ENCODE measurements at regions of chr15 and their contacts with region 1.

Region 1: DNA sequence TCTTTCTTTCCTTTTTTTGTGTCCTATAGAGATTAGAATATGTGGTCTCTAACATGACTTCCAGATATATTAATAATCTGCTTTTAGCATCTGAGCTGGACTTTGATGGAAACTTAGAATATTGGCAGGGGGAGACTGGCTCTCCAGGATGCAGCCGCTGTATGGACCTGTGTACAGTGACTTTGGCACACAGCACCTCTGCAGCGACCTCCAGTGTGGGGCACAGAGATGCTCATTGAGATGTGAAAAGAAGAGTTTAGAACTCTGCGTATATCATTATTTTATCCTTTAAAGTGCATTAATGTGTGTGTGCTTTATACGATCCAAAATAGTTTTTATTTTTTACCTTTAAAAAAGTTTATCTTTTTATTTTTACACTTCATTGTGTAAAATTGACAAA is 18.3 kb downstream of the CFAP161 start:
- DNase-seq: no peak
- H3K4me3 ChIP-seq: no peak overlapping the region
- H3K27ac ChIP-seq: no peak overlapping the region
- H3K4me1 ChIP-seq: peaks cover 0 to 21% of the 10 kb centered on the region in 2 donors
- H3K27me3 ChIP-seq: no peaks in the 10 kb centered on the region
- CTCF ChIP-seq: no peak
- POLR2A ChIP-seq: no peak

Region 2: GRCh38 chr15:81106560-81106959 is 45.8 kb before region 1 on chr15:
- intact Hi-C with region 1: loop called (anchors 5 kb)
- DNase-seq: peak; percentile 49 to 58
- H3K4me3 ChIP-seq: no peak overlapping the region
- H3K27ac ChIP-seq: no peak overlapping the region
- H3K4me1 ChIP-seq: no peaks in the 10 kb centered on the region
- H3K27me3 ChIP-seq: no peaks in the 10 kb centered on the region
- CTCF ChIP-seq: peak; percentile 40 to 87 (median 78)
- POLR2A ChIP-seq: no peak

Region 3: DNA sequence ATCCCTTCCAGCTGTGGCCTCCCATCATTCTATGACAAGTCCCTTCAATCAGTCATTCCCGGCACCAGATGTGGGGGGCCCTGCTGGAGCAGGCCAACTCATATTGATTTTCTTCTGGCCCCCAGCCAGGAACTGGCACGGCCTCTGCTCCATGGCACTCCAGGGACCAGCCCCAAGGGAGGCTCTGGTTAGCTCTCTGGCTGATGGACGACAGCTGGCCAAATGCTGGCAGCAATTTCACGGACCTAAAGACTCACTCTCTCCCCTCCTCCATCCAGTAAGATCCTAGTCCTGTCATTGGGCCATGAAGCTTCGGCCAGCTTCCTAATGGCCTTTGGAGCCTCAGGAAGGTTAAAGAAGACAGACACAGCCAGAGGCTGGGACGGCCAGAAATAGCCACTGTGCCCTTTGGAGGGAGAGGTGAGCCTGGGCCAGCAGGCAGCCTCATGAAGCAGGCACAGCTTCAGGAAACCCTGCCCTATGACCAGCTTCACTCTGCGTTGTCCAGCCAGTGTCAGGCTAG is 762.5 kb after region 1 on chr15:
- intact Hi-C with region 1: no loop called
- DNase-seq: no peak
- H3K4me3 ChIP-seq: no peak overlapping the region
- H3K27ac ChIP-seq: no peak overlapping the region
- H3K4me1 ChIP-seq: no peaks in the 10 kb centered on the region
- H3K27me3 ChIP-seq: no peaks in the 10 kb centered on the region
- CTCF ChIP-seq: no peak
- POLR2A ChIP-seq: no peak